Prostate gland (tissue), 2 donors: ENCODE measurements at regions of chr1 and their contacts with region 1.

Region 1: GRCh38 chr1:8137481-8138244 is 111.6 kb upstream of the ERRFI1 start:
- DNase-seq: no peak
- H3K4me3 ChIP-seq: no peak overlapping the region
- H3K27ac ChIP-seq: peak overlapping the region; percentile 5 to 26
- H3K4me1 ChIP-seq: no peaks in the 10 kb centered on the region
- H3K27me3 ChIP-seq: no peaks in the 10 kb centered on the region
- CTCF ChIP-seq: no peak
- POLR2A ChIP-seq: no peak

Region 2: DNA sequence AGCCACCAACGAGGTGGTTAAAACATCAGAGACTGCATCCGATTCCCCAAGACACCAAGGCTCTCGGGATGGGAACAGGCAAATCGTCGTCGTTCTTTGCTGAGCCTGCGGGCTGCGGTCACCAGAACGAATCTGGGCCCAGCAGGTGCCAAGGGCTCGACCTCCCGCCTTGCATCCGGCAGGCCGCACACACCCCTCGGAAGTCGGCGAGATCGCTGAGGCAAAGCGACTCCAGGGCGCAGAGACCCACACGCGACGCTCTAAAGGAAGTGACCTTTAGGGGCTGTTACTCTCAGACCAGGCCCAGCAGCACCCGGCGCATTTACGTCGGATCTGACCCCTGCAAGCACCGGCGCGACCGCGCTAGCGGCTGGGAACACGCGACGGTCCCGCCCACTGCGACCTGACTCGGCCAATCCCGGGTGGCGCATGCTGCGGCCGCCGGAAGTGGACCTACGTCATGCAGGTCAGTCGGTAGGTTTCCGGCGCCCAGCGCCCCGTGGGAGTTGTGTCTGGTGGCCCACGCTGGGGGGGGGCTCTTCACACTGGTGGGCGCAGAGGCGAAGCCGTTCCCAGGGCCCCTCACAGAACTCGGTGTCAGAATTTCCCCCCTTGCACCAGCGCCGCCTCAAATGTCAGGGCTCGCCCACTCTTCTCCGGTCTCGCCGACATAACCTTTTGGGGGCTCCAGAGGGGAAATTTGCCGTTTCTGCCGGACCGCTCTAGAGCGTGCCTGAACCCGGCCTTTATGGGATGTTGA is 183.6 kb before region 1 on chr1:
- intact Hi-C with region 1: no loop called
- DNase-seq: peak; percentile 85
- H3K4me3 ChIP-seq: peak overlapping the region; percentile 38 to 46
- H3K27ac ChIP-seq: peak overlapping the region; percentile 60 to 71
- H3K4me1 ChIP-seq: no peaks in the 10 kb centered on the region
- H3K27me3 ChIP-seq: no peaks in the 10 kb centered on the region
- CTCF ChIP-seq: peak in 1 of 4 experiments; percentile 25
- POLR2A ChIP-seq: peak; percentile 58

Region 3: DNA sequence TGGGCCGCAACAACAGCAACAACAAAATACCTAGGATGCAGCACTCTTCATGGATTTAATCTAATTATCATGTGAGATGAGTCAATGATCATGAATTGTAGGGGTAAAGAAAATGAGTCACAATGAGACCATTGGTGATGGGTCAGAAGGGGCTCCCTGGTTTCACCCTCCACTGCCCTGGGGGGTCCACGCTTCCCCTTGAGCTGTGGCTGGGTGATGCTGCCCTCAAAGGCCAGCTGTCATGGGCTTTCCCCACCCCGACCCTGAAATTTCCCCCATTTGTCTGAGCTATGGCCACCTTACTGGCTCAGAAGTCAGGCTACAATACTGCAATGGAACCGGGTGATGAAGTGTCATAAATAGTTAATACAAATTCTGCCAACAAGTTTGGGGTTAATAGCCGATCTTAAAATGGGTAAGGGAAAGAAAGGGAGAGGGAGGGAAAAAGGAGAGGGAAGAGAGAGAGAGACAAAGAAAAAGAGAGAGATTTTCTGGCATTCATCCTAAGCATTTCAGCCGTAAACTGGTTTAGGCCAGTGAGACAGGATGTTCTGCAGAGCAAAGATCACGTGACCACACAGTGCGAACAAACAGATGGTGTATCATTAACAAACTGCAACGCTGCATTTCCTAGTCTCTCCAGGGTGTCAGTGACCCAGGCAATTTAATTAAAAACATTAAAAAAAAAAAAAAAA is 31.8 kb after region 1 on chr1:
- intact Hi-C with region 1: loop called (anchors 5 kb)
- DNase-seq: peak; percentile 87
- H3K4me3 ChIP-seq: no peak overlapping the region
- H3K27ac ChIP-seq: peak overlapping the region; percentile 77 to 82
- H3K4me1 ChIP-seq: peaks cover 8% of the 10 kb centered on the region
- H3K27me3 ChIP-seq: no peaks in the 10 kb centered on the region
- CTCF ChIP-seq: peak in 1 of 4 experiments; percentile 20
- POLR2A ChIP-seq: no peak

Region 4: GRCh38 chr1:8314346-8315280 is 176.9 kb after region 1 on chr1:
- intact Hi-C with region 1: loop called (anchors 10 kb)
- DNase-seq: peak; percentile 86
- H3K4me3 ChIP-seq: no peak overlapping the region
- H3K27ac ChIP-seq: peak overlapping the region in 1 of 2 donors; percentile 78
- H3K4me1 ChIP-seq: peaks cover 12% of the 10 kb centered on the region
- H3K27me3 ChIP-seq: no peaks in the 10 kb centered on the region
- CTCF ChIP-seq: peak; percentile 81 to 99 (median 96)
- POLR2A ChIP-seq: no peak